ENCODE measurements at regions of chr2 and their contacts with region 1.

Region 1: DNA sequence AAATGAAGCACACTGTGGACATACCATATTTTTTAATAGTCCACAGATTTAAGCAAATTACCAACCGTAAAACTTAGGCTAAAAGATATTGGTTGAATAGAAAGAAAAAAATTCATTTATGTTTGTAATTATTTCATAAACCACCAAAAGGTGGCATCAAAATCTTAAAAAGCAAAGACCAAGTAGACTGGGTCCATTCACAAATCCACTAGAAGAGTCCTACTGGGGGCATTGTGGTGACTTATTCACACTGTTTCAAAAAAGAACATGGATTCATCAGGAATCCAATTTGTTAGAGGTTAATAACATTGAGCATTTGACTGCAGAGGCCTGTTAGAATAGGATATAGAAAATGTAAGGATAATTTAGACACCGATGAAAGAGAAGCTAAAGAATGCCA is 194.9 kb upstream of the KYNU start:
- DNase-seq: peak; percentile 65
- H3K4me3 Mint-ChIP-seq: no peak overlapping the region
- H3K27ac Mint-ChIP-seq: no peak overlapping the region
- H3K4me1 Mint-ChIP-seq: peaks cover 19% of the 10 kb centered on the region
- H3K27me3 Mint-ChIP-seq: no peaks in the 10 kb centered on the region
- CTCF ChIP-seq: peak; percentile 54

Region 2: GRCh38 chr2:142868281-142868762 is 185.8 kb after region 1 on chr2:
- CTCF ChIA-PET with region 1: interaction called, 14 read pairs
- POLR2A ChIA-PET with region 1: interaction called, 9 read pairs
- intact Hi-C with region 1: no loop called
- DNase-seq: peak; percentile 95
- H3K4me3 Mint-ChIP-seq: peak overlapping the region; percentile 65
- H3K27ac Mint-ChIP-seq: peak overlapping the region; percentile 87
- H3K4me1 Mint-ChIP-seq: peaks cover 57% of the 10 kb centered on the region
- H3K27me3 Mint-ChIP-seq: no peaks in the 10 kb centered on the region
- CTCF ChIP-seq: no peak

Region 3: GRCh38 chr2:142877216-142877756 is 194.8 kb after region 1 on chr2 and contains the start of gene KYNU:
- CTCF ChIA-PET with region 1: interaction called, 45 read pairs
- POLR2A ChIA-PET with region 1: interaction called, 15 read pairs
- intact Hi-C with region 1: loop called (anchors 1 kb)
- DNase-seq: peak; percentile 87
- H3K4me3 Mint-ChIP-seq: peak within 1 kb of the TSS; percentile 93
- H3K27ac Mint-ChIP-seq: peak within 1 kb of the TSS; percentile 97
- H3K4me1 Mint-ChIP-seq: peaks cover 50% of the 10 kb centered on the region
- H3K27me3 Mint-ChIP-seq: no peaks in the 10 kb centered on the region
- CTCF ChIP-seq: peak; percentile 24
- total RNA-seq, gene KYNU: 143 and 160 TPM in 2 replicates

Region 4: GRCh38 chr2:142974288-142975024 is 291.9 kb after region 1 on chr2:
- CTCF ChIA-PET with region 1: interaction called, 81 read pairs
- POLR2A ChIA-PET with region 1: no interaction called
- intact Hi-C with region 1: no loop called
- DNase-seq: peak; percentile 35
- H3K4me3 Mint-ChIP-seq: no peak overlapping the region
- H3K27ac Mint-ChIP-seq: peak overlapping the region; percentile 81
- H3K4me1 Mint-ChIP-seq: peaks cover 24% of the 10 kb centered on the region
- H3K27me3 Mint-ChIP-seq: no peaks in the 10 kb centered on the region
- CTCF ChIP-seq: no peak

Region 5: DNA sequence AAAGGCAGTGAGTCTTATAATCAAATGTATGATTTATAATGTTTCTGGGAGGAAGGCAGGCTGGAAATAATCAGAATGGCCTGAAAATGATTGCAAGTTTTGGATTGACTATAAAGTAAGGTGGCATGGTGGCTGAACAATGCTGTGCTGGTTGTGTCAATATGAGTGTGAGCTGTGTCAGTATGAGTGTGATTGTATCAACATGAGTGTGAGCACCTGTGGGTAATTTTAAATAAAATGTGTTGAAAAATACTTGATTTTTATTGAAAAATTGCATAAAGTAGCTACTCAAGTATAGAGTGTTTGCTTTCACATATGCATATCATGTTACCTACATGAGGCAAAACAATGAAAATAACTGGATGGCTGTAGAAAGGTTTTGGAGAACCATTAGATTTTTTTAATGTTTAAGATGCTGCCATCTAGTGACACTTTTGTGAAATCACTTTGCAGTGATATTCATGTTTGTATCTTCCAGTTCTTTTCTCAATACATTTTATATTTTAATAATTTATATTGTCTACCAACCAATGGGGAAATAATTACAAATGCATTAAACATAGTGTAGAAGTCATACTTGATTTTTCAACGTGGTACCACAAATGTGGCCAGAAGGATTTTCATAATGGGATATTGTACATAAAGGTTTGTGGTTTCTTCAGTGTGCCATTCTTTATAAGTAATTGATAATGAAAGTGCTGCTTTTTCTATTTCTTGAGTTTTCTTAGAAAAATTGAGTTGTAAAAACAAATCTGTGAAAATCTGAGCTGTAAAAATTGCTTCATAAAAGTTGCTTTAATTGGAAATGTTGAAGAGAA is 298.2 kb after region 1 on chr2:
- CTCF ChIA-PET with region 1: interaction called, 81 read pairs
- POLR2A ChIA-PET with region 1: interaction called, 3 read pairs
- intact Hi-C with region 1: loop called (anchors 1 kb)
- DNase-seq: peak; percentile 38
- H3K4me3 Mint-ChIP-seq: no peak overlapping the region
- H3K27ac Mint-ChIP-seq: no peak overlapping the region
- H3K4me1 Mint-ChIP-seq: peaks cover 6% of the 10 kb centered on the region
- H3K27me3 Mint-ChIP-seq: no peaks in the 10 kb centered on the region
- CTCF ChIP-seq: peak; percentile 44

Region 6: DNA sequence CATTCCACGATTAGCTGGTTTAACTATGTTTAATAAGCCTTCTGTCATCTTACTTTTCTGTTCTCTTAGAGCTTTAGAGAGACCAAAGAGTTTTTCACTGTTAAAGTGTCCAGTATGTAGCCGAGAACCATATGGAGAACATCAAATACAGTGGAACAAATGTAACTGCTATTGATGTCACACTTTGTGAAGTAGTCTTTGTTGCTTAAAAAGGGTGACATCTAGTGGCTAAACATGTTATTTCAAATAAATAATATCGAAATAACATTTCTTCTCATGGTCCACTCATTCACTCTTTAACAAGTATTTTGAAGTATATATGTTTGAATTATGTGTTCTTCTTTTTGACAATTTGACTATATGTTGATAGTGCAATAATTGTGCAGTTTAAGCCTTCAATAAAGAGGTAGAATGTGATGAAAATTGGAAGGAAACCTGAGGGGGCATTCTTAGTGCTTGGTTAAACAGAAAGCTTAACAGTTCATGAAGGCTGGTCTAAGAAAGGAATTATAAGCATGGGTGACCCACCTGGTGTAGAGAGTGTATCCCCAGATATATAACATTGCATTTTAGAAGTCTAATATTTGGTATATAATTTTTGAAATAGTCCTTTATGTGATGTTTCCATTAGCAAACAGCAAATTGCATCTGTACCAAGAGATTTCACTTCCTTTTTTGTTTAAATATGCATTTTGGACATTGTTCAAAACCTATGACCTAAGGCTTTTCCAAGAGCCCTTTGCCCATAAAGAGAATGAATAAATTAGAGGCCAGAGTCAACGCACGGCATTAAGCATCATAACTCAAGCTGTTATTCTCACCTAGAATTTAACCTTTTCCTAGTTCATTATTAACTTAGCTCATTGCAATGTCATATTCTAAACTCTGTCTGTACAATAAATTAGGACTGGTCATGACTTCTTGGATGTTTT is 307.0 kb after region 1 on chr2:
- CTCF ChIA-PET with region 1: interaction called, 32 read pairs
- POLR2A ChIA-PET with region 1: interaction called, 3 read pairs
- intact Hi-C with region 1: no loop called
- DNase-seq: peak; percentile 30
- H3K4me3 Mint-ChIP-seq: no peak overlapping the region
- H3K27ac Mint-ChIP-seq: no peak overlapping the region
- H3K4me1 Mint-ChIP-seq: peaks cover 7% of the 10 kb centered on the region
- H3K27me3 Mint-ChIP-seq: no peaks in the 10 kb centered on the region
- CTCF ChIP-seq: peak; percentile 32

Measured in MCF 10A (cell line).